ENCODE measurements at regions of chr12 and their contacts with region 1.

Region 1: DNA sequence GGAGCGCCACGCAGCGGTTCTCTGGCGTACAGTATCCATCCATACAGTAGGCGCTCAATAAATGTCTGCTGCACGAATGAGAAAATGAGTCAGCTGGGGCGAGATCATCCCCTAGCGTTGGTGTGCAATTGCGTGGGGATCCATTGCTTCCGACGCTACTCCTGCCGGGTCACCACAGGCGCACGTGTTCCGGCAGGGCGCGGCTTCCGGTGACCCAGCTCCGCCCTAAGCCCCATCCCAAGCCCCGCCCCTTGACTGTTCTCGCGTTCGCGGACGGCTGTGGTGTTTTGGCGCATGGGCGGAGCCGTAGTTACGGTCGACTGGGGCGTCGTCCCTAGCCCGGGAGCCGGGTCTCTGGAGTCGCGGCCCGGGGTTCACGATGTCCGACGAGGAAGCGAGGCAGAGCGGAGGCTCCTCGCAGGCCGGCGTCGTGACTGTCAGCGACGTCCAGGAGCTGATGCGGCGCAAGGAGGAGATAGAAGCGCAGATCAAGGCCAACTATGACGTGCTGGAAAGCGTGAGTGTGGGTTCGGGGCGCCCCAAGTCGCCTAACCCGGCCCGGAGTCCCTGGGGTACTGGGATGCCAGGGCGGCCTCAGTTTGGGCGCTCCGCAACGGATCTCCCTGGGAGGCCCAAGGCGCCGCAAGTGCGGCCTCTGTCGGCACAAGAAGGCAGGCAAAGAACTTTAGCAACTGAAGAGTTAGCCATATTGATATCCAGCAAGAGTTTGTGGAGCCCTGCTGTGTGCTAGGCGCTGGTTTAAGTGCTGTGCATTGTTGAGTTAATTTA is at the start of gene PSMD9:
- DNase-seq: peak; percentile 99
- H3K4me3 ChIP-seq: peak within 1 kb of the TSS; percentile 67 to 78 (median 74)
- H3K27ac ChIP-seq: peak within 1 kb of the TSS; percentile 94 to 97 (median 97)
- H3K4me1 ChIP-seq: peaks cover 0 to 35% (median 29%) of the 10 kb centered on the region in 4 donors
- H3K27me3 ChIP-seq: no peaks in the 10 kb centered on the region
- CTCF ChIP-seq: peak; percentile 59 to 65 (median 62)
- EP300 ChIP-seq: peak in 1 of 4 donors; percentile 56
- POLR2A ChIP-seq: peak; percentile 35 to 74
- total RNA-seq, gene PSMD9: 28.5 to 91.4 (median 39.1) TPM

Region 2: GRCh38 chr12:121600702-121601336 is 287.9 kb before region 1 on chr12:
- intact Hi-C with region 1: no loop called
- DNase-seq: no peak
- H3K4me3 ChIP-seq: no peak overlapping the region
- H3K27ac ChIP-seq: no peak overlapping the region
- H3K4me1 ChIP-seq: no peaks in the 10 kb centered on the region
- H3K27me3 ChIP-seq: no peaks in the 10 kb centered on the region
- CTCF ChIP-seq: no peak
- EP300 ChIP-seq: no peak
- POLR2A ChIP-seq: no peak

Region 3: DNA sequence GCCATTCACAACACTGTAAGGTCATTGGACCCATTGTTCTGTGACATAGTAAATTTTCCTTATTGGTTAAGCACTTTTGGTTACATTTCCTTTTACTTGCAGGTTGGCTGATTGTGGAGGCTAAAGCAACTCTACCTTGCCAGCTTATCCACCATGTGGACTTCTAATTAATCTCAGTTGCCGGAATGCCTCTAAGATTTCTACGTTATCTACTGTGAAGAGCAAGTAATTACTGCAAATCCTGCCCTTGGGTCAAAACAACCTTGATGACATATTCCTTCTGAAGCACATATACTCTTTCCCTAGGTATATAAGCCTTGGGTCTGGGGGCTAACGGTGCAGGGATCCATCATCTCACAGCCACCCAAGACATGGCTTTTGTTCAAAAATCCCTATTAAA is 199.7 kb before region 1 on chr12:
- intact Hi-C with region 1: loop called (anchors 5 kb)
- DNase-seq: no peak
- H3K4me3 ChIP-seq: no peak overlapping the region
- H3K27ac ChIP-seq: no peak overlapping the region
- H3K4me1 ChIP-seq: peaks cover 0 to 12% (median 9%) of the 10 kb centered on the region in 4 donors
- H3K27me3 ChIP-seq: no peaks in the 10 kb centered on the region
- CTCF ChIP-seq: no peak
- EP300 ChIP-seq: no peak
- POLR2A ChIP-seq: no peak

Region 4: DNA sequence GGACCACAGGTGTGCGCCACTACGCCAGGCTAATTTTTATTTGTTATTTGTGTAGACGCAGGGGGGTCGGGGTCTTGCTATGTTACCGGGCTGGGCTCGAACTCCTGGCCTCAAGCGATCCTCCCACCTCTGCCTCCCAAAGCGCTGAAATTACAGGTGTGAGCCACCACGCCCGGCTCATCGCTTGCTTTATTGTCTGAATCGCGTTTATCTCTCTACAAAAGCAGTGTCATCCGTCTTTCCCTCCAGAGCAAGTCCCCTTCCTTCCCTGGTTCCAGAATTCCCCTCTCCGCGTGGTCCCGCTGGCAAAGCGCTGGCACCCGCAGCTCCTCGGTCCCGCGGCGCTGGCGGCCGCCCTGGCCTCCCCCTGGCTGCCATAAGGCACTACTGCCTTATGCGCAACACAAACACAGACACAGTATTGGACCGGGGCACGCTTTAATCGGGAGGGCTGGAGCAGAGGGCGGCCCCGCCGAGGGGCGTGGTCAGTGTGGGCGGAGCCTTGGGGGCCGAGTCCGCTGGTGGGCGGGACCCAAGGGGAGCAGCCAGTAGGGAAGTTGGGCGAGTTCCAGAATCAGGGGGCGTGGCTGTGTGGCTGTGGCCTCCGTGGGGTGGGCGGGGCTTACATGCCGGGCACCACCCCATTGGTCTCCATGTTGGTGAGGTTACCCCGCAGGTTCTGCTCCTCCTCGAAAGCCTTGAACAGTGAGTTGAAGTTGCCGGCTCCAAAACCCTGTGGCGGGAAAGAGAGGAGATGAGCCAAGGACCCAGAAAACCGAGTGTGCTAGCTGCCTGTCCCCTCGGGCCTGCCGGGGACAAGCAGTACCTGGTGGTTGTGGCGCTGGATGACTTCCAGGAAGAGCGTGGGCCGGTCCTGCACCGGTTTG is 49.3 kb before region 1 on chr12:
- intact Hi-C with region 1: loop called (anchors 2 kb)
- DNase-seq: peak; percentile 100
- H3K4me3 ChIP-seq: peak overlapping the region; percentile 45 to 57 (median 54)
- H3K27ac ChIP-seq: peak overlapping the region; percentile 55 to 78 (median 75)
- H3K4me1 ChIP-seq: peaks cover 0 to 13% (median 11%) of the 10 kb centered on the region in 4 donors
- H3K27me3 ChIP-seq: no peaks in the 10 kb centered on the region
- CTCF ChIP-seq: peak; percentile 30 to 53 (median 48)
- EP300 ChIP-seq: no peak
- POLR2A ChIP-seq: peak; percentile 16 to 26

Region 5: GRCh38 chr12:122123051-122123760 is 234.5 kb after region 1 on chr12:
- intact Hi-C with region 1: no loop called
- DNase-seq: peak; percentile 87
- H3K4me3 ChIP-seq: peak overlapping the region in 2 of 4 donors; percentile 8 to 10
- H3K27ac ChIP-seq: peak overlapping the region; percentile 5 to 77 (median 74)
- H3K4me1 ChIP-seq: peaks cover 0 to 88% (median 74%) of the 10 kb centered on the region in 4 donors
- H3K27me3 ChIP-seq: no peaks in the 10 kb centered on the region
- CTCF ChIP-seq: peak; percentile 79 to 91 (median 84)
- EP300 ChIP-seq: no peak
- POLR2A ChIP-seq: no peak